Activated CD4-positive, alpha-beta T cell treated with anti-CD3 and anti-CD28 coated beads, Interleukin-2, amount 10 ng/mL, durations not matched to agents 24 days and 14 days (primary cell): ENCODE measurements at regions of chr3 and their contacts with region 1.

Region 1: GRCh38 chr3:192514081-192514753 is 213.1 kb downstream of the FGF12 start:
- DNase-seq: peak; percentile 55
- H3K4me3 Mint-ChIP-seq: no peak overlapping the region
- H3K27ac Mint-ChIP-seq: no peak overlapping the region
- H3K4me1 Mint-ChIP-seq: peaks cover 2% of the 10 kb centered on the region
- H3K27me3 Mint-ChIP-seq: peaks cover 42% of the 10 kb centered on the region

Region 2: DNA sequence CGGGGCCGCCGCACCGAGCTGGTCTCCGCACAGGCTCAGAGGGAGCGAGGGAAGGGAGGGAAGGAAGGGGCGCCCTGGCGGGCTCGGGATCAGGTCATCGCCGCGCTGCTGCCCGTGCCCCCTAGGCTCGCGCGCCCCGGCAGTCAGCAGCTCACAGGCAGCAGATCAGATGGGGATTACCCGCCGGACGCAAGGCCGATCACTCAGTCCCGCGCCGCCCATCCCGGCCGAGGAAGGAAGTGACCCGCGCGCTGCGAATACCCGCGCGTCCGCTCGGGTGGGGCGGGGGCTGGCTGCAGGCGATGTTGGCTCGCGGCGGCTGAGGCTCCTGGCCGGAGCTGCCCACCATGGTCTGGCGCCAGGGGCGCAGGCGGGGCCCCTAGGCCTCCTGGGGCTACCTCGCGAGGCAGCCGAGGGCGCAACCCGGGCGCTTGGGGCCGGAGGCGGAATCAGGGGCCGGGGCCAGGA is 104.8 kb before region 1 on chr3:
- intact Hi-C with region 1: loop called (anchors 5 kb)
- DNase-seq: no peak
- H3K4me3 Mint-ChIP-seq: no peak overlapping the region
- H3K27ac Mint-ChIP-seq: no peak overlapping the region
- H3K4me1 Mint-ChIP-seq: no peaks in the 10 kb centered on the region
- H3K27me3 Mint-ChIP-seq: peaks cover 58% of the 10 kb centered on the region

Region 3: GRCh38 chr3:193693774-193694173 is 1179.6 kb after region 1 on chr3:
- intact Hi-C with region 1: no loop called
- DNase-seq: no peak
- H3K4me3 Mint-ChIP-seq: no peak overlapping the region
- H3K27ac Mint-ChIP-seq: no peak overlapping the region
- H3K4me1 Mint-ChIP-seq: no peaks in the 10 kb centered on the region
- H3K27me3 Mint-ChIP-seq: no peaks in the 10 kb centered on the region